HEK293 (cell line): ENCODE measurements at regions of chrX and their contacts with region 1.

Region 1: DNA sequence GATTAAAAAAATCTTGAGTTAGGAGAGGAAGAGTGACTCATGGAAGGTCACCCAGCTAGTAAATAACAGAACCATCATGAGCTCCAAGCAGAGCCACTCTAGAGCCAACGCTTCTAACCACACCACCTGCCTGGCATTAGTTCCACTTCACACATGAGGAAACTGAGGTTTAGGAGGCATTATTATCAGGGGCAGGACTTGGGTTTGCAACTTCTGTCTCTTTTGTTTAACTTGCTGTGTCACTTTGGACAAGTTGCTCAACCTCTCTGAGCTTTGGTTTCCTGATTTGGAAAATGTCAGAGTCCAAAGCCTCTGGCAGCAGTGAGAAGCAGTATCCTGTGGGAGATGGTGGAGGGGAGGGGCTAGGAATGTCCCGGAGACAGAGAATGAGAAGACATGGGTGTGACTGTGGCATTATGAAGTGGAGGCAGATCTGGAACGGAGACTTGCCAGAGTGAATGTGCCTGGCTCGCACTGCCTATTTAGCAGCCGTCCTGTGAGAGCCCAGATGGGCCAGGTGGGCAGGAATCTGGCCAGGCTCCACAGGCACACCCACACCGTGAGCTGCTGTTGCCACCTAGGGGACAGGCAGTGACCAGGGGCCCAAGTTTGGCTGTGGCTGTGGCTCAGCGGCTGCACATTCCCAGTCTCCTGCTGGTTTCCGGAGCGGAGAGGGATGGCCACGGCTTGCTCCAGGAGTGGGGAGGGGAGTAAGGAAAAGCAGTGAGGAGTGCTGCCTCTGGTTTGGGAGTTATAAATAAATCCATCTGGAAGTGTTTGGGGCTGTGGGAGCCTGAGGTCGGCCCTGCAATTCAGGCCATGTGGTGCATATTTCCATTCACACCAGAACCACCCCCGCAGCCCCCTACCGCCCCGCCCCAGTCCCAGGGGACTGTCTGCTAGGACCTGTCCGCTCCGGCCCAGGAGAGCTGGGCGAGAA is 93.4 kb downstream of the NHSL2 start:
- H3K4me3 ChIP-seq: no peak overlapping the region
- H3K27ac ChIP-seq: no peak overlapping the region
- H3K4me1 ChIP-seq: no peaks in the 10 kb centered on the region
- CTCF ChIP-seq: peak; percentile 88

Region 2: GRCh38 chrX:71989768-71990426 is 14.2 kb before region 1 on chrX:
- CTCF ChIA-PET with region 1: interaction called, 42 read pairs
- POLR2A ChIA-PET with region 1: no interaction called
- H3K4me3 ChIP-seq: no peak overlapping the region
- H3K27ac ChIP-seq: no peak overlapping the region
- H3K4me1 ChIP-seq: no peaks in the 10 kb centered on the region; the same call in 1 of the 2 replicates
- CTCF ChIP-seq: no peak